ENCODE measurements at regions of chr22 and their contacts with region 1.

Region 1: DNA sequence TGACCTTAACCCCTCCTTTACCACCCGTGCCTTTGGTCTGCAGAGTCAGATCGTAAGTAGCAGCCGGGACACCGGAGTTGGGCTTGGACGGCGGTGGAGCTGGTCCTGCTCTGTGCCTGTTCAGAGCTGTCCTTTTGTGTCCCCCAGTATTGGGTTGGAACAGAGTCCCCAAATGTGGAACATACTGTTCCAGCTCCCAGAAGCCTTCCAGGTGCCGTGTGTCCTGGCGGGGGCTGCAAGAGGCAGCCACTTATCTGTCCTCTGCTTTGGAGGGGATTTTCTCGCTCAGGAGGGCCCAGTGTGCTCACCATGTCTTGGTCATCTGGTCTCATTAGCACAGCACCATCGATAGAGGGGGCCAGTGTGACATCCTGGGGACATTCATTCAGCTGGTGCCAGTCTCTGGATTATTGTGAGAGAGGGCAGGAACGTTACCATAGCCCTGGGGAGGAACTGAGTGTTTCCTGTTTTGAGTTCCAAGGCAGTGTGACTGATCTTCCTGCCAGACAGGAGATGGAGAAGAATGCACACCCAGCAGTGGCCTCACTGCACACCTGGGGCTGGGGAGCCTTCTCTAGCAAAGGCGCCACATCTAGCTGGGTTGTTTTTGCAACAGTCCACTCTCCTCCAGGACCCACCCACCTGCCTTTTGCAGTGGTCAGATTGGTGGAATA is 12.4 kb downstream of the CRELD2 start:
- DNase-seq: peak in 7 of 9 donors; percentile 37 to 55 (median 44)
- ATAC-seq: peak; percentile 40
- H3K4me3 ChIP-seq: no peak overlapping the region
- H3K4me3 Mint-ChIP-seq: peak overlapping the region; percentile 34 to 83 (median 60)
- H3K27ac ChIP-seq: peak overlapping the region; percentile 37
- H3K27ac Mint-ChIP-seq: peak overlapping the region; percentile 79 to 92 (median 87)
- H3K4me1 ChIP-seq: peaks cover 10 to 28% of the 10 kb centered on the region in 2 donors
- H3K4me1 Mint-ChIP-seq: peaks cover 18 to 47% (median 39%) of the 10 kb centered on the region in 7 donors
- H3K27me3 ChIP-seq: no peaks in the 10 kb centered on the region
- H3K27me3 Mint-ChIP-seq: no peaks in the 10 kb centered on the region

Region 2: DNA sequence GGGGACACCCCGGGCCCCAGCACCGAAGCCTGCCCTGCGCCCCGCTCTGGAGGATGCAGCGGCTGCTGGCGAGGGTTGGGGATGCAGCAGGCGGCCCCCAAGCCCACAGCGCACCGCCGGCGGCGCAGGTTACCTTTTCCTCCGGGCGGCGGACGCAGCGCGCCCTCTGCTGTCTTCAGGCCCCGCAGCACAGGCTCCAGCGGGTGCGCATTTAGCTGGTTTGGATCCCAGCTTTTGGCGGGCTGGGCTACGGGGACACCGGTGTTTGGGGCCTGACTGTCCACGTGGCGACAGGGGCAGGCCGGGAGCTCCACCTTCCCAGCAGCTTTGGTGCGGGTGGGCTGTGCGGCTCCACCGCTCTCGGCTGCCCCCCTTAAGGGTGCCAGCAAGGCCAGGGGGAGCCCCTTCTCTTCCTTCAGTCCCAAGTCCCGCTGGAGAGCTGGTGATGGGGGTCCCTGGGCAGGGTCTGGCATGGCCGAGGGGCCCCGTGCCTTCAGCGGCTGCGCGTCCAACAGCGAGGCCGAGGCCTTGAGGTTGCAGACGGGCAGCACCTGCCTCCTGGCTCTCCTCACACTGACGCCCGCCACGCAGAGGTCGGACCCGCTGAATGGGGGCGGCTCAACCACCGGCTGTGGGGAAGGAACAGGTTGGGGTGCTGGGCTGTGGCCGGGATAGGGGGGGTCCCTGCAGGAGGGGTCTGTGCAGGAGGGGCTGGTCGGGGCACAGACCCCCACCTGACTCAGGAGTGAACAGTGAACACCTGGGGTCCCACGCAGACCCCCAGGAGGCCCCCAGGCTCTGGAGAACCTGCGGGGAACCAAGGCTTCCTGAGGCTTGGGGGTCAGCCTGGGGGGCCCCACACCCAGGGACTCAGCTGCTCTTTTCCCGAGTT is 99.7 kb after region 1 on chr22:
- CTCF ChIA-PET with region 1: interaction called, 45 read pairs
- POLR2A ChIA-PET with region 1: interaction called, 7 read pairs
- intact Hi-C with region 1: loop called (anchors 1 kb)
- DNase-seq: peak; percentile 65 to 84 (median 80)
- ATAC-seq: peak; percentile 95
- H3K4me3 ChIP-seq: no peak overlapping the region
- H3K4me3 Mint-ChIP-seq: peak overlapping the region in 1 of 10 donors; percentile 34
- H3K27ac ChIP-seq: no peak overlapping the region
- H3K27ac Mint-ChIP-seq: no peak overlapping the region
- H3K4me1 ChIP-seq: peaks cover 2 to 9% of the 10 kb centered on the region in 2 donors
- H3K4me1 Mint-ChIP-seq: peaks cover 0 to 12% (median 5%) of the 10 kb centered on the region in 7 donors
- H3K27me3 ChIP-seq: no peaks in the 10 kb centered on the region
- H3K27me3 Mint-ChIP-seq: peaks cover 0 to 27% (median 6%) of the 10 kb centered on the region in 5 donors

Region 3: GRCh38 chr22:50209893-50210292 is 279.0 kb after region 1 on chr22:
- CTCF ChIA-PET with region 1: no interaction called
- POLR2A ChIA-PET with region 1: no interaction called
- intact Hi-C with region 1: loop called in 1 of 2 experiments (anchors 5 kb)
- DNase-seq: peak; percentile 50 to 78 (median 68)
- ATAC-seq: peak; percentile 83
- H3K4me3 ChIP-seq: no peak overlapping the region
- H3K4me3 Mint-ChIP-seq: peak overlapping the region in 1 of 10 donors; percentile 25
- H3K27ac ChIP-seq: no peak overlapping the region
- H3K27ac Mint-ChIP-seq: peak overlapping the region in 8 of 9 donors; percentile 58 to 96 (median 82)
- H3K4me1 ChIP-seq: no peaks in the 10 kb centered on the region
- H3K4me1 Mint-ChIP-seq: peaks cover 12 to 39% (median 32%) of the 10 kb centered on the region in 7 donors
- H3K27me3 ChIP-seq: no peaks in the 10 kb centered on the region
- H3K27me3 Mint-ChIP-seq: no peaks in the 10 kb centered on the region

Measured in naive thymus-derived CD4-positive, alpha-beta T cell (primary cell).